GM12878 (cell line): ENCODE measurements at regions of chr15 and their contacts with region 1.

Region 1: DNA sequence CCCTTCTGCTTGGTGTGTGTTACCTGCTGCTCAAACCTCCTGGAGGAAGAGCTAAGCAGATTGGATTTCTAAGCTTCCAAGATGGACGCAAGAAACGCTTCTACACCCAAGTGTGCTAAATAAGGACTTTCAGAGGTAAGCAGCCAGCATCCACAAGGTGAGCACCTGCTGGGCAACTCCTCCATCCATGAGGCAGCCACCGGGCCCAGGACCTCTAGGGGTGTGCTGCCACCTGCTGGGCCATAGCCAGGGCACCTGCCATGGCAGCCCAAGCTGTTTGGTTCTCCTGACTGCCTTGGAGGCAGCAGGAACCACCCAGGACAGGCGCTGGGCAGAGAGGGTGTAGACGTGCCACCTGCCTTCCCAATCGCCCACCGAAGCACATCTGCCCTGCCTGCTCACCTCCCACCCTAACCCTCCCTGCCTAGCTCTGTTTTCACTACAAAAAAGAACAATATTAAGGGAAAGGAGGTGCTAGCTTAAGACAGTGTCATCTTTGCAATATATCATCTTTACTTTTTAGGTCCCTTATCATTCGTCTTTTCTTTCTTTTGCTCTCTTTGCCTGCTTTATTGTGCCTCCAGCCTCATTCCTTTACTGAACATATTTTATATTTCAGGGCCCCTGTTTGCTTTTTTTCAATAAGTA is 12.9 kb downstream of the C15orf62 start:
- DNase-seq: no peak
- ATAC-seq: peak; percentile 100
- H3K4me3 ChIP-seq: no peak overlapping the region
- H3K27ac ChIP-seq: no peak overlapping the region
- H3K4me1 ChIP-seq: peaks cover 5% of the 10 kb centered on the region
- H3K27me3 ChIP-seq: no peaks in the 10 kb centered on the region
- CTCF ChIP-seq: peak; percentile 89 to 98 (median 97)
- EP300 ChIP-seq: no peak
- POLR2A ChIP-seq: no peak
- RAD21 ChIP-seq: peak; percentile 88

Region 2: GRCh38 chr15:40525855-40526254 is 256.8 kb before region 1 on chr15:
- CTCF ChIA-PET with region 1: interaction called, 25 read pairs
- POLR2A ChIA-PET with region 1: no interaction called
- RAD21 ChIA-PET with region 1: no interaction called
- SMC1A ChIA-PET with region 1: interaction called, 12 read pairs
- in situ Hi-C with region 1: no loop called
- intact Hi-C with region 1: no loop called
- DNase-seq: no peak
- ATAC-seq: no peak
- H3K4me3 ChIP-seq: no peak overlapping the region
- H3K27ac ChIP-seq: no peak overlapping the region
- H3K4me1 ChIP-seq: peaks cover 6% of the 10 kb centered on the region
- H3K27me3 ChIP-seq: no peaks in the 10 kb centered on the region
- CTCF ChIP-seq: no peak
- EP300 ChIP-seq: no peak
- POLR2A ChIP-seq: no peak
- RAD21 ChIP-seq: no peak

Region 3: DNA sequence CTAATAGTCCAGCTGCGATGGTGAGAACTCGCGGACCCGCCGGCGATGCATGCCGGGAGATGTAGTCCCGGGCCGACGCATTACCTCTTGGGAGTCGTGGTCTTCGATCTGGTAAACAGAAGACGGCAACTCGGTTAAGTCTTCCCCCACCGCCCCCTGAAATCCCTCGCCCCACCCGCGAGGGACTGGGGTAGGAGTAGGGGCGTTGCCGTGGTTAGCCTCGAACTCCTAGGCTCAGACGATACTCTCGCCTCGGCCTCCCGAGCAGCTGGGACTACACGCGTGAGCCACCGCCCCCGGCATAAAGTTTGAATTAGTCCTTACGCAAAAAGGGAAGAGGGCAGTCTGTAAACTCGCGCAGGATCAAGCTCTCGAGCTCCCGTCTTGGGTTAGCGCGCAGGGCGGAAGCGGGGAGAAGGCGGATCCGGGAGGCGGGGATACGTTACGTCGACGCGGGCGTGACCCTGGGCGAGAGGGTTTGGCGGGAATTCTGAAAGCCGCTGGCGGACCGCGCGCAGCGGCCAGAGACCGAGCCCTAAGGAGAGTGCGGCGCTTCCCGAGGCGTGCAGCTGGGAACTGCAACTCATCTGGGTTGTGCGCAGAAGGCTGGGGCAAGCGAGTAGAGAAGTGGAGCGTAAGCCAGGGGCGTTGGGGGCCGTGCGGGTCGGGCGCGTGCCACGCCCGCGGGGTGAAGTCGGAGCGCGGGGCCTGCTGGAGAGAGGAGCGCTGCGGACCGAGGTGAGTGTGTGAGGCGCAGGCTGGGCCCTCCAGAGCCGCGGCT is 87.8 kb before region 1 on chr15 and contains the start of gene RAD51:
- CTCF ChIA-PET with region 1: interaction called, 20 read pairs
- POLR2A ChIA-PET with region 1: interaction called, 4 read pairs
- RAD21 ChIA-PET with region 1: interaction called, 7 read pairs
- SMC1A ChIA-PET with region 1: interaction called, 14 read pairs
- in situ Hi-C with region 1: no loop called
- intact Hi-C with region 1: loop called (anchors 5 kb)
- DNase-seq: peak; percentile 84
- ATAC-seq: peak; percentile 95
- H3K4me3 ChIP-seq: peak within 1 kb of the TSS; percentile 96
- H3K27ac ChIP-seq: peak within 1 kb of the TSS; percentile 86
- H3K4me1 ChIP-seq: peaks cover 2% of the 10 kb centered on the region
- H3K27me3 ChIP-seq: no peaks in the 10 kb centered on the region
- CTCF ChIP-seq: no peak
- EP300 ChIP-seq: 0 out of 4 replicates have a peak, but pooled peaks of 1 of the 2 experiments have one; percentile 40
- POLR2A ChIP-seq: peak; percentile 82
- RAD21 ChIP-seq: no peak
- polyA plus RNA-seq, gene RAD51: 13.1 to 23.6 TPM

Region 4: GRCh38 chr15:40743921-40744814 is 38.5 kb before region 1 on chr15:
- CTCF ChIA-PET with region 1: interaction called, 37 read pairs
- POLR2A ChIA-PET with region 1: interaction called, 7 read pairs
- RAD21 ChIA-PET with region 1: interaction called, 14 read pairs
- SMC1A ChIA-PET with region 1: interaction called, 22 read pairs
- in situ Hi-C with region 1: no loop called
- intact Hi-C with region 1: loop called (anchors 5 kb)
- DNase-seq: no peak
- ATAC-seq: peak; percentile 67
- H3K4me3 ChIP-seq: no peak overlapping the region
- H3K27ac ChIP-seq: no peak overlapping the region
- H3K4me1 ChIP-seq: peaks cover 9% of the 10 kb centered on the region
- H3K27me3 ChIP-seq: no peaks in the 10 kb centered on the region
- CTCF ChIP-seq: no peak
- EP300 ChIP-seq: no peak
- POLR2A ChIP-seq: no peak
- RAD21 ChIP-seq: no peak

Region 5: GRCh38 chr15:40769274-40770146 is 13.2 kb before region 1 on chr15 and contains the start of gene C15orf62:
- CTCF ChIA-PET with region 1: interaction called, 17 read pairs
- POLR2A ChIA-PET with region 1: interaction called, 3 read pairs
- RAD21 ChIA-PET with region 1: interaction called, 11 read pairs
- SMC1A ChIA-PET with region 1: interaction called, 8 read pairs
- in situ Hi-C with region 1: no loop called
- intact Hi-C with region 1: no loop called
- DNase-seq: peak; percentile 53
- ATAC-seq: peak; percentile 51
- H3K4me3 ChIP-seq: no peak within 1 kb of the TSS
- H3K27ac ChIP-seq: peak within 1 kb of the TSS; percentile 65
- H3K4me1 ChIP-seq: peaks cover 32% of the 10 kb centered on the region
- H3K27me3 ChIP-seq: no peaks in the 10 kb centered on the region
- CTCF ChIP-seq: no peak
- EP300 ChIP-seq: no peak; a peak in 1 of 4 replicates
- POLR2A ChIP-seq: no peak; the same call in 1 of the 2 replicates
- RAD21 ChIP-seq: no peak
- polyA plus RNA-seq, gene C15orf62: 0.06 TPM in 1 of 2 experiments, not detected in the other